ENCODE measurements at regions of chr2 and their contacts with region 1.

Region 1: GRCh38 chr2:9205963-9206948 is at the start of gene ASAP2:
- DNase-seq: peak; percentile 76 to 90
- ATAC-seq: peak; percentile 76 to 80
- H3K4me3 ChIP-seq: peak within 1 kb of the TSS; percentile 93
- H3K27ac ChIP-seq: peak within 1 kb of the TSS; percentile 83 to 93
- H3K4me1 ChIP-seq: peaks cover 35% of the 10 kb centered on the region
- CTCF ChIP-seq: peak; percentile 97
- EP300 ChIP-seq: peak in 1 of 2 experiments; percentile 8; a peak in 2 of 5 replicates
- POLR2A ChIP-seq: peak; percentile 38; the same call in 1 of the 2 replicates
- RAD21 ChIP-seq: peak; percentile 65 to 89
- polyA plus RNA-seq, gene ASAP2: 27.9 TPM in 2 replicates

Region 2: GRCh38 chr2:9178904-9179571 is 27.2 kb before region 1 on chr2:
- CTCF ChIA-PET with region 1: interaction called, 13 read pairs
- POLR2A ChIA-PET with region 1: interaction called, 3 read pairs
- DNase-seq: peak in 1 of 2 experiments; percentile 26
- ATAC-seq: peak; percentile 27 to 56; a peak in 4 of 6 replicates
- H3K4me3 ChIP-seq: no peak overlapping the region
- H3K27ac ChIP-seq: peak overlapping the region; percentile 37 to 50; a peak in 5 of 6 replicates
- H3K4me1 ChIP-seq: peaks cover 23% of the 10 kb centered on the region
- CTCF ChIP-seq: no peak
- EP300 ChIP-seq: no peak
- POLR2A ChIP-seq: no peak
- RAD21 ChIP-seq: no peak

Region 3: GRCh38 chr2:9217838-9218770 is 11.8 kb after region 1 on chr2:
- CTCF ChIA-PET with region 1: interaction called, 14 read pairs
- POLR2A ChIA-PET with region 1: no interaction called
- DNase-seq: no peak
- ATAC-seq: no peak; a peak in 1 of 6 replicates
- H3K4me3 ChIP-seq: no peak overlapping the region
- H3K27ac ChIP-seq: no peak overlapping the region
- H3K4me1 ChIP-seq: peaks cover 10% of the 10 kb centered on the region; the same call in 2 of the 3 replicates
- CTCF ChIP-seq: no peak
- EP300 ChIP-seq: no peak
- POLR2A ChIP-seq: no peak
- RAD21 ChIP-seq: no peak

Region 4: DNA sequence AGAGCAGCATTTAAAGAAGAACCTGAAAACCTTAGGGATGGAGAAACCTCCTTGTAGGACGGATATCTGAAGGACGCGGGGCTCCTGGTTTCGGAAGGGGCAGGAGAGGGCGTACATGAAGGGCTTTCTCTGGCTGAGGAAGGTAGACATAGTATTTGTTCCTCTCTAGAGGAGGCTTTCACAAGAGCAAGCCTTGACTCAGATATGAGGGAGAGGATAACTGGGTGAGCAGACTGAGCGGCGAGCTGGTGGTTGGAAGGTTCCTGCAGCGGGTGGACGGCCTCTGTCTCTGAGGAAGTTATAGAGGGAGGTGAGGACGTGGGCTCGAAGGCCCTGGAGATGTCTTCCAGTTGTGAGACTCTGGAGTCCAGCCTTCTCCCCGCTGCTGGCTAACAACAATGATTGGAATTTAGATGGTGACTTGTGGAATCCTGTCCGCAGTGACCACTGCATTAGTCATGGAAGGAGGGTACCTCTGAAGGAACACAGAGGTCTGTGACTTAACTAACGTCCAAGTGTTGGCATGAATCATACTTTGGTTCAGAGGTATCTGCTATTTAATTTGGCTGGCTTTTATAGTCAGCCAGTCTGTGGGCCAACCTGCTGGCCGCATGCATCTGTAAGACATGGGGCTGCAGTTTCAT is 81.3 kb after region 1 on chr2:
- CTCF ChIA-PET with region 1: interaction called, 24 read pairs
- POLR2A ChIA-PET with region 1: interaction called, 4 read pairs
- DNase-seq: peak; percentile 94 to 99
- ATAC-seq: peak; percentile 94 to 95
- H3K4me3 ChIP-seq: no peak overlapping the region; the same call in 1 of the 3 replicates
- H3K27ac ChIP-seq: peak overlapping the region; percentile 86 to 87
- H3K4me1 ChIP-seq: peaks cover 58% of the 10 kb centered on the region
- CTCF ChIP-seq: peak; percentile 21; the same call in 1 of the 3 replicates
- EP300 ChIP-seq: peak; percentile 52 to 61; a peak in 2 of 5 replicates
- POLR2A ChIP-seq: no peak
- RAD21 ChIP-seq: peak in 1 of 2 experiments; percentile 41; a peak in 4 of 5 replicates

Region 5: GRCh38 chr2:9333591-9334171 is 127.4 kb after region 1 on chr2:
- CTCF ChIA-PET with region 1: interaction called, 114 read pairs
- POLR2A ChIA-PET with region 1: interaction called, 10 read pairs
- DNase-seq: peak; percentile 70 to 83
- ATAC-seq: peak; percentile 96
- H3K4me3 ChIP-seq: no peak overlapping the region
- H3K27ac ChIP-seq: peak overlapping the region; percentile 27 to 51; a peak in 3 of 6 replicates
- H3K4me1 ChIP-seq: peaks cover 15% of the 10 kb centered on the region
- CTCF ChIP-seq: peak; percentile 88
- EP300 ChIP-seq: no peak
- POLR2A ChIP-seq: no peak
- RAD21 ChIP-seq: peak; percentile 92 to 93